GM10248 (cell line): ENCODE measurements at regions of chr3 and their contacts with region 1.

Region 1: DNA sequence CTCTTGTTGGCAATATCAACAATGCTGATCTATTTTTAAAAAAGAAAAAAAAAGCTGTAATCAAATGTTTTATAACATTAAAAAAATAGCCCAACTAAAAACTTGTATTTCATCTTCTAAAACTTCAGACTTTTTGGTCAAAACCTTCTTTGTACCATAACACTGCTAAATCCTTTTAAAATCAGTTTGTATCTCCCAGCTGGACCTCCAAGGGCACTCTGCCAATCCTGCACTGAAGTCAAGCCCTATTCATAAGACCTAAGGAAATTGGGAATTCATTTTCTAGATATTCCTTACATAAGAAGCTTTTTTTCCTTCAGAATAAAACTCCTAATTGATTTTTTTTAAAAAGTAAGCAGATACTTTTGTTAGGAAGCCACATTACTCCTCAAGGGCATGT is 38.2 kb upstream of the HCLS1 start:
- DNase-seq: no peak
- CTCF ChIP-seq: no peak

Region 2: DNA sequence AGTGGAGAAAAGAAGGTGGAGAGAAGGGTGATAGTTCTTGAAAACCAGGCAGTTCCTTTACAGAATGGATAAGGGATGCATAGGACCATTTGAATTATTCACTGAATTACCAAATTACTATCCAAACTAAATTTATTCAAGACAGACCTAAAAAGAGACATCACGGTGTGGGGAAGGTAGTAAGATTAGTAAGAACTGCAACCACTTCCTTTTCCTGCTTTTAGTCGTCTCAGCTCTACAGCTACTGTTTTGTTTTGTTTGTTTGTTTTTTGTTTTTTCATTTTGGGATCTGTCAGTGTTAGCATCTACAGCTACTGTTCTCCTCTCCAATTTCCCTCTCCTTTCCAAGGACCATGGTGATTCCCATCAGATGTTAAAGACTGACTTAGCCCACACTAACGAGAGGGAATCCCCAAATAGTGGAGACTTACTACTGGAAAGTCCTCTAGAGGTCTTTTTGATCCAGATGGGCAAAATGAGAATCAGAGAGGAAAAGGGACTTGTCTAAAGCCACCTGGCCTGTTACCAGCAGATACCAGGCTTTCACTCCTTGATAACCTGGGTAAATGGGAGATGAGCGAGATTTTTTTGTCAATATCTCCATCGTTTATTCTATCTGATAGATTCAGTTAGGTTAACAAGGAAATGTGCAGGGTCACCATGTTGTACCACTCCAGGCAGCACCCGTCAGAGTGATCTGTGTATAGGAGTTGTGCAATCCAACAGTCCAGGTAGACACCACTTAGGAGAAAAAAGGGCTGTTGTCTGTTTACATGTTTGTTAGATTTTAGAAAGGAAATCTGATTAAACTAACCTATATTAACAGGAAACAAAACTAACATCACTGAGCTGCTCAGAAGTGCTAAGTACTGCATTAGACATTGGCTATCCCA is 44.2 kb before region 1 on chr3:
- CTCF ChIA-PET with region 1: no interaction called
- POLR2A ChIA-PET with region 1: no interaction called
- DNase-seq: peak; percentile 34
- CTCF ChIP-seq: no peak

Region 3: GRCh38 chr3:121681792-121682191 is 17.1 kb before region 1 on chr3:
- CTCF ChIA-PET with region 1: interaction called, 15 read pairs
- POLR2A ChIA-PET with region 1: no interaction called
- DNase-seq: no peak
- CTCF ChIP-seq: no peak

Region 4: GRCh38 chr3:121724130-121724529 is 25.2 kb after region 1 on chr3:
- CTCF ChIA-PET with region 1: interaction called, 10 read pairs
- POLR2A ChIA-PET with region 1: no interaction called
- DNase-seq: peak; percentile 43
- CTCF ChIP-seq: no peak

Region 5: GRCh38 chr3:121739902-121740301 is 41.0 kb after region 1 on chr3:
- CTCF ChIA-PET with region 1: no interaction called
- POLR2A ChIA-PET with region 1: no interaction called
- DNase-seq: no peak
- CTCF ChIP-seq: no peak

Region 6: DNA sequence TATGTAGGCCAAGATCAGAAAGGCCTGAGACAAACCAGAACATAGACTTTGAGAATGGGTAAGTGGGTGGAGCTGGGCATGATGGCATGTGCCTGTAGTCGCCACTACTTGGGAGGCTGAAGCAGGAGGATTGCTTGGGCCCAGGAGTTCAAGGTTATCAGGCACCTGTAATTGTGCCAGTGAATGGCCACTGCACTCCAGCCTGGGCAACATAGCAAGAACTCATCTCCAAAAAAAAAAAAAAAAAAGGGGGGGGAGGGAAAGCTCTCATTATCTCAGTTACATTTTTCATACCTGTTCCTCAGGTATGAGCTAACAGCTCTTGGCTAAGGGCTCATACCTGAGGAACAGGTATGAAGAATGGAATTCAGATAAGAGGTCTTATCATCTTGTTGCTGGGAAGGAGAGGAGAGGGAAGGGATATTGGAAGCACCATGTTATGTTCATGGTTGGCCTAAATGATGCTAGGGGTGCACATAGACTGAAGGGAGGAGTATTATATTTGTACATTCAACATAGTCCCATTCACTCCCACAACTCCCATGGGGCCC is 197.8 kb after region 1 on chr3:
- CTCF ChIA-PET with region 1: no interaction called
- POLR2A ChIA-PET with region 1: no interaction called
- DNase-seq: no peak
- CTCF ChIP-seq: no peak